Natural killer cell (primary cell): ENCODE measurements at regions of chr2 and their contacts with region 1.

Region 1: GRCh38 chr2:178891265-178891958 is 84.2 kb upstream of the TTN start:
- DNase-seq: peak; percentile 17 to 76
- ATAC-seq: peak; percentile 54 to 71 (median 55)
- H3K4me3 ChIP-seq: no peak overlapping the region
- H3K4me3 Mint-ChIP-seq: no peak overlapping the region
- H3K27ac ChIP-seq: no peak overlapping the region
- H3K27ac Mint-ChIP-seq: no peak overlapping the region
- H3K4me1 ChIP-seq: no peaks in the 10 kb centered on the region
- H3K4me1 Mint-ChIP-seq: peaks cover 0 to 6% of the 10 kb centered on the region in 2 donors
- H3K27me3 ChIP-seq: no peaks in the 10 kb centered on the region
- H3K27me3 Mint-ChIP-seq: no peaks in the 10 kb centered on the region
- CTCF ChIP-seq: peak; percentile 92

Region 2: DNA sequence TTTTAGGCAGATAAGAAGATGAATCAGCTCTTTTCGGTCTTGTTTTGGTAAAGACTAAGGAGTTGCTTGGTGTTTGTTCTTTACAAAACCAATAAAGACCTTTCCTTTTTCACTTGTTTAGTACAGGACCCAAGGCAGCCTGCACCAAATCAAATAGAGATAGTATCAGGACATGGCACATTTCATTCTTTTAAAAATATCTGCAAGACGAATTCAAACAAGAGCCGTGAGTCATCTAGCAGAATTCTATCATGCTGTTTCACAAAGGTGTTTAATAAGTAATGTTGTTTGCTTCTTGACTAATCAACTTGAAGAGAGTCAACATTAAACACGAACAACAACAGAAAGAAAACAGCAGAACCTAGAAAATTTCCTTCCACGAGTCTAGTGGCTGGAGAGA is 18.6 kb after region 1 on chr2:
- intact Hi-C with region 1: no loop called
- DNase-seq: no peak
- ATAC-seq: no peak
- H3K4me3 ChIP-seq: no peak overlapping the region
- H3K4me3 Mint-ChIP-seq: no peak overlapping the region
- H3K27ac ChIP-seq: no peak overlapping the region
- H3K27ac Mint-ChIP-seq: no peak overlapping the region
- H3K4me1 ChIP-seq: no peaks in the 10 kb centered on the region
- H3K4me1 Mint-ChIP-seq: peaks cover 0 to 6% of the 10 kb centered on the region in 2 donors
- H3K27me3 ChIP-seq: no peaks in the 10 kb centered on the region
- H3K27me3 Mint-ChIP-seq: peaks cover 0 to 2% of the 10 kb centered on the region in 2 donors
- CTCF ChIP-seq: no peak

Region 3: DNA sequence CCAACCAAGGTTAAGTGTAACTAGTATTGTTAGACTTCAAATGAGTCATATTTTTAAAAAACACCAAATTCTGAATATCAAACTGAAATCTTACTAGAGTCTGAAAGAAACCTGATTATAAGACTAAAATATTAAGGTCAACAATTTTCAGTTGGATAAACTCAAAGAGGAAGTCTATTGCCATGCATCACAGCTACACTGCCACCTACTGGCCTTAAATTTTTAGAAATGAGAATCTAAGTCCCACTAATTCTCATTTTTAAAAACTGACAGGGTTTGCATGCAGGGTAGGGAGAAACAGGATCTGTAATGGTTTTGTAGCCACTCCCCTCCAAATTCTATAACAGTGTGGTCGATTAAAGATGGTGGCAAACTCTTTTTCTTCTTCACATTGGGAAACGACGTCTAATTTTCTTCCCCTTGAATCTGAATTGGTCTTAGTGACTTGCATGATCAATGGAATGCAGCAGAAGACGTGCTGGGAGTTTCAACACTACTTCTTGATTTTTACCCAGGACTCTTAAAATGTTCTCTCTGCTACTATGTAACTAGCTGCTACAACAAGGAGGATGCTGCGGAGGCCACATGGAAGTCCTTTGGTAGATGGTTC is 549.3 kb after region 1 on chr2:
- intact Hi-C with region 1: loop called (anchors 5 kb)
- DNase-seq: peak in 1 of 2 donors; percentile 59
- ATAC-seq: peak in 1 of 3 donors; percentile 45
- H3K4me3 ChIP-seq: no peak overlapping the region
- H3K4me3 Mint-ChIP-seq: no peak overlapping the region
- H3K27ac ChIP-seq: no peak overlapping the region
- H3K27ac Mint-ChIP-seq: no peak overlapping the region
- H3K4me1 ChIP-seq: no peaks in the 10 kb centered on the region
- H3K4me1 Mint-ChIP-seq: no peaks in the 10 kb centered on the region
- H3K27me3 ChIP-seq: no peaks in the 10 kb centered on the region
- H3K27me3 Mint-ChIP-seq: peaks cover 4 to 38% of the 10 kb centered on the region in 2 donors
- CTCF ChIP-seq: peak; percentile 51